BJ (cell line): ENCODE measurements at regions of chr15 and their contacts with region 1.

Region 1: GRCh38 chr15:90071208-90071807 is 31.0 kb downstream of the IDH2 start:
- DNase-seq: peak; percentile 23
- H3K4me3 ChIP-seq: no peak overlapping the region
- H3K27me3 ChIP-seq: no peaks in the 10 kb centered on the region
- CTCF ChIP-seq: peak; percentile 83

Region 2: DNA sequence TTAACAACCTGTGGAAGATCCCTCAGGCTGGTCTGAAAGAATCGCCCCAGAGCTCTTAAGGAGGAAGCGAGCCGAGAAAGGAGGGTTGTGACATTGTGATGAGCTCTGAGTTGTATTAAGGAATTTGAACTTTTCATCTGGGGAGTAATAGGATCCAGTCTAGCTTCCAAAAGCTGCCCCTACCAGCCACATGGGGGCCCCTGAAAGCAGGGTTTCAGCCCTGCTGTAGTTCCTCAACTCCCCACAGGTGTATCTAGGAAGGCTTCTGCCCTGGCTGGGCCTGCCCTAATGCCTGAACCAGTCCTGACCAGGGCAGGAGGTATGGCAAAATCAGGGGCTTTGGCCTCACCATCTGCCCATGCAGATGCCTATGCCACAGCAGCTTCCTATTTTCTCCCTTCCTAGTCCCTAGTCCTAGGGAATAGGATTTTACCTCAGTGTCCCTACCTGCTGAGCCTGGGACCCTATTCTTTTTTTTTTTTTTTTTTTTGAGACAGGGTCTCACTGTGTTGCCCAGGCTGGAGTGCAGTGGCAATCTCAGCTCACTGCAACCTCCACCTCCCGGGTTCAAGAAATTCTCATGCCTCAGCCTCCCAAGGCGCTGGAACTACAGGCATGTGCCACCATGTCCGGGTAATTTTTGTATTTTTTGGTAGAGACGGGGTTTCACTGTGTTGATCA is 172.6 kb before region 1 on chr15:
- CTCF ChIA-PET with region 1: interaction called, 23 read pairs
- POLR2A ChIA-PET with region 1: no interaction called
- DNase-seq: no peak
- H3K4me3 ChIP-seq: no peak overlapping the region
- H3K27me3 ChIP-seq: no peaks in the 10 kb centered on the region
- CTCF ChIP-seq: peak; percentile 72

Region 3: GRCh38 chr15:89912674-89913396 is 158.5 kb before region 1 on chr15 and contains the start of gene ARPIN:
- CTCF ChIA-PET with region 1: interaction called, 11 read pairs
- POLR2A ChIA-PET with region 1: no interaction called
- DNase-seq: no peak
- H3K4me3 ChIP-seq: peak within 1 kb of the TSS; percentile 77
- H3K27me3 ChIP-seq: no peaks in the 10 kb centered on the region
- CTCF ChIP-seq: no peak
- polyA plus RNA-seq, gene ARPIN: 10.0 and 11.2 TPM in 2 replicates

Region 4: DNA sequence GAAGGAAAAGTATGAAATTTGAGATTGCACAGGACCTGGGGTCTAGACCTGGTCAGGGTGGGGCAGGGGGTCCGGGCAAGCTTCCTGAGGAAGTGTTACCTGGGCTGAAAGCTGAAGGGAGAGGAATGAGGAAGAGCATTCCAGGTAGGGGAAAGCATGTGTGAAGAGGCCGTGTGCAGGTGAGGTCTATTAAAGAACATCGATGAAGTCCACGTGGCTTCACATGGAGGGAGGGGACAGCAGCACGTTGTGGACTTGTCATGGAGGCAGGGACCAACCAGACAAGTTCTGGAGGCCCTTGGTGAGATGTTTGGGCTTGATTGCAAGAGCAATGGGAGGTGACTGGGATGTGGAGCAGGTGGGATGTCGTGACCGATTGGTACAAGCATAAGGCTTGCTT is 16.1 kb before region 1 on chr15:
- CTCF ChIA-PET with region 1: interaction called, 11 read pairs
- POLR2A ChIA-PET with region 1: no interaction called
- DNase-seq: no peak
- H3K4me3 ChIP-seq: no peak overlapping the region
- H3K27me3 ChIP-seq: no peaks in the 10 kb centered on the region
- CTCF ChIP-seq: no peak

Region 5: DNA sequence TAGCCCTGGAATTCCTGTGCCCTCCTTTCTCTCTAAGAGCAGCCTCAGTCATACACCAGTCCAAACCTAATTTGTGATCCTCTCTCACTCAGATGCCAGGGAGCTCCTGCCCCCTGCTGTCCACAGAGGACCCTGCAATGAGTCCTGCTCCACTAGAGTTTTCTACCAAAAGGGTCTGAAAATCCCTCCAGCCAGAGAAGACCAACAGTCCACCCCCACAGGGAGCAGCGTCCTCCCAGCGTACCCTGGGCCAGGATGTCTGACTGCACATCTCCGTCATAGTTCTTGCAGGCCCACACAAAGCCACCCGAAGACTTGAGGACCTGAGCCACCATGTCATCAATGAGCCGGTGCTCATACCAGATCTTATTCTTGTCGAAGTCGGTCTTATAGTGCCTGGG is 15.6 kb after region 1 on chr15:
- CTCF ChIA-PET with region 1: interaction called, 10 read pairs
- POLR2A ChIA-PET with region 1: no interaction called
- DNase-seq: no peak
- H3K4me3 ChIP-seq: no peak overlapping the region
- H3K27me3 ChIP-seq: no peaks in the 10 kb centered on the region
- CTCF ChIP-seq: peak; percentile 79